Activated CD4-positive, alpha-beta T cell treated with anti-CD3 and anti-CD28 coated beads for 36 hours (primary cell): ENCODE measurements at regions of chr9 and their contacts with region 1.

Region 1: DNA sequence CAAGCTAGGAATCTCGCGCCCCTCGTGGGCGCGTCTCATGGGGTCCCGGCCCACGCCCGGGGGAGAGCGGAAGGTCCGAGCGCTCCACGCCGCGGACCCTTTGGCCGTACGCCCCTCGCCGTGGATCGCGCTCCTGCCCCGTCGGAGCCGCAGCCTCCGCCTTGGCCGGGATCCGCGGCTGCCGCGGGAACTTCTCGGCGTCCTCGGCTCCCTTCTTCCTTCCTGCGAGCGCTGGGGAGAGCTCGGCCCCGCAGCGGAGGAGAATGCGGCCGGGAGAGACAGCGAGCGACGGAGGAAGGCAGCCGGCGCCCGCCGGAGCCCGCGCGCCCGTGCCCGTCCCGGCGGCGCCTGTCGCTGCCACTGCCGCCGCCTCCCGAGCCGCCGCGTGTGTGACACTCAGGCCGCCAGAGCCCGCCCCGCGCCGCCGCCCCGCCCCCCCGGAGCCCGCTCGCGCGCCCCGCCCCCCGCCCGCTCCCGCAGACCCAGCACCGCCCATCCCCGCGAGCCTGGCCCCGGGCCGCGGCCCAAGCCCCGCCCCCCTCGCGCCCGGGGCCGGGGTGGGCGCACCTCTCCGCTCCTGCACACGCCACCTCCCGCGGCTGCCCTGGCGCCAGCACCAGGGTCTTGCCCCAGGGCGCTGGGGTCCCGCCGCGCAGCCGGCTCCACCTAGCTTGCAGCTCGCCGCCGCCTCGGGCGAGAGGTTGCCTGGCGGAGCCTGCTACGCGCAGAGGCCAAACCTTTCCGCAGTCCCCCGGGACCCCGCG is at the start of gene SHB:
- DNase-seq: peak; percentile 86
- ATAC-seq: peak; percentile 80
- H3K4me3 Mint-ChIP-seq: peak within 1 kb of the TSS; percentile 56
- H3K27ac Mint-ChIP-seq: no peak within 1 kb of the TSS
- H3K4me1 Mint-ChIP-seq: peaks cover 15% of the 10 kb centered on the region
- H3K27me3 Mint-ChIP-seq: peaks cover 7% of the 10 kb centered on the region
- total RNA-seq, gene SHB: 1.2 to 1.3 TPM

Region 2: GRCh38 chr9:37465249-37466036 is 603.6 kb before region 1 on chr9 and contains the start of gene ZBTB5:
- CTCF ChIA-PET with region 1: no interaction called
- POLR2A ChIA-PET with region 1: no interaction called
- intact Hi-C with region 1: loop called in 1 of 2 experiments (anchors 2 kb)
- DNase-seq: peak; percentile 99
- ATAC-seq: peak; percentile 85
- H3K4me3 Mint-ChIP-seq: peak within 1 kb of the TSS; percentile 97
- H3K27ac Mint-ChIP-seq: peak within 1 kb of the TSS; percentile 96
- H3K4me1 Mint-ChIP-seq: peaks cover 30% of the 10 kb centered on the region
- H3K27me3 Mint-ChIP-seq: no peaks in the 10 kb centered on the region
- total RNA-seq, gene ZBTB5: 8.0 to 9.1 TPM

Region 3: GRCh38 chr9:37784616-37785483 is 284.2 kb before region 1 on chr9 and contains the start of gene EXOSC3:
- CTCF ChIA-PET with region 1: no interaction called
- POLR2A ChIA-PET with region 1: no interaction called
- intact Hi-C with region 1: loop called in 1 of 2 experiments (anchors 5 kb)
- DNase-seq: peak; percentile 93
- ATAC-seq: peak; percentile 90
- H3K4me3 Mint-ChIP-seq: peak within 1 kb of the TSS; percentile 98
- H3K27ac Mint-ChIP-seq: peak within 1 kb of the TSS; percentile 96
- H3K4me1 Mint-ChIP-seq: peaks cover 30% of the 10 kb centered on the region
- H3K27me3 Mint-ChIP-seq: no peaks in the 10 kb centered on the region
- total RNA-seq, gene EXOSC3: 86.9 to 117 TPM

Region 4: GRCh38 chr9:37913480-37914153 is 155.4 kb before region 1 on chr9:
- CTCF ChIA-PET with region 1: interaction called, 6 read pairs
- POLR2A ChIA-PET with region 1: no interaction called
- intact Hi-C with region 1: loop called (anchors 1 to 2 kb)
- DNase-seq: peak; percentile 88
- ATAC-seq: peak; percentile 91
- H3K4me3 Mint-ChIP-seq: no peak overlapping the region
- H3K27ac Mint-ChIP-seq: no peak overlapping the region
- H3K4me1 Mint-ChIP-seq: no peaks in the 10 kb centered on the region
- H3K27me3 Mint-ChIP-seq: no peaks in the 10 kb centered on the region

Region 5: DNA sequence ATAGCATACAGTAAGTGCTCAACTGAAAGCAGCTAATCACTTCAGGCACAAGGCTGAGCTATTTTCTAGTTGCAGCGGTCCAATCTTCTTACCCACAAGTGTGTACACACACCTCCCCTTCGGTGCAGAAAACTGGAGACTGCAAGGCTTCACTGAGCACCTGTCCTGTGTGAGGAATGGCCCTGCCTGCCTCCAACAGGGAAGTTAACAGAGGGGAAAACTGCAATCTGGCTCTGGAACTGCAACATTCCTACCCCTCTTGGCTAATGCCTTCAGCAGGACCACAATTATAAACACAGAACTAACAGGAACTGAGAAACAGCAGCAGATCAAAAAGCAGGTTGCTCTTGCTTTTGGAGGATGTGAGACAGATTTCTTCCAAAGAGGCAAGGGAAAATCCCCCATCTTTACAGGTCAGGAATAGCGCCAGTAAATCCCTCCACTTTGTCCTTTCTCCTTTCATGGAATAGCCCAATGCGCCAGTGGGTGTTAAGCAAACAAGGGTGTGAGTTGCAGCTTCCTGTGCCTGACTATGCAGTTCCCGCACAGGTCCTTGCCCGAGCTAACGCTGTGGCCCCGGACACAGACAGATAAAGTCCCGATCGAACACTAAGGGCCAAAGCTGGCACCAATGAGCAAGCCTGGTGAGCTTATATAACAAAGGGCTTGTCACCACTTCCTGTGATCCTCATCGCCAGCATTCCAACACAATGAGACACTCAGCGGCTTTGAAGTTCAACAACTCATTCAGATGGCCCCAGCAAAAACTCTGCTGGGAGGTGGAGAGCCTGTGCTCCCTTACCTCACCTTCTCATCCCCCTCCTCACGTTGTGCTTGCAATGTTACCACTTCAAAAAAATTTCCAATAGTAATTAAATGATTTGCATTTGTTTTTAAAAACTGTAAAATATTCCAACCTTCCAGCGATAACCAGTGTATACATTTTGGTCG is 21.5 kb before region 1 on chr9:
- CTCF ChIA-PET with region 1: no interaction called
- POLR2A ChIA-PET with region 1: no interaction called
- intact Hi-C with region 1: loop called in 1 of 2 experiments (anchors 2 kb)
- DNase-seq: no peak
- ATAC-seq: peak; percentile 42
- H3K4me3 Mint-ChIP-seq: no peak overlapping the region
- H3K27ac Mint-ChIP-seq: no peak overlapping the region
- H3K4me1 Mint-ChIP-seq: peaks cover 6% of the 10 kb centered on the region
- H3K27me3 Mint-ChIP-seq: no peaks in the 10 kb centered on the region

Region 6: GRCh38 chr9:38620483-38621433 is 551.7 kb after region 1 on chr9 and contains the start of gene ANKRD18A:
- CTCF ChIA-PET with region 1: no interaction called
- POLR2A ChIA-PET with region 1: no interaction called
- intact Hi-C with region 1: loop called in 1 of 2 experiments (anchors 2 kb)
- DNase-seq: peak; percentile 89
- ATAC-seq: peak; percentile 89
- H3K4me3 Mint-ChIP-seq: peak within 1 kb of the TSS; percentile 76
- H3K27ac Mint-ChIP-seq: peak within 1 kb of the TSS; percentile 83
- H3K4me1 Mint-ChIP-seq: peaks cover 10% of the 10 kb centered on the region
- H3K27me3 Mint-ChIP-seq: peaks cover 26% of the 10 kb centered on the region
- total RNA-seq, gene ANKRD18A: 6.4 to 7.5 TPM